Spleen (tissue), 13 donors: ENCODE measurements at regions of chr3 and their contacts with region 1.

Region 1: GRCh38 chr3:10738688-10739372 is 77.2 kb upstream of the SLC6A11 start:
- DNase-seq: peak; percentile 88
- H3K4me3 ChIP-seq: peak overlapping the region in 4 of 8 donors; percentile 9 to 50 (median 26)
- H3K27ac ChIP-seq: no peak overlapping the region
- H3K4me1 ChIP-seq: peaks cover 0 to 9% (median 7%) of the 10 kb centered on the region in 6 donors
- H3K27me3 ChIP-seq: peaks cover 0 to 62% (median 17%) of the 10 kb centered on the region in 7 donors
- CTCF ChIP-seq: peak; percentile 66 to 90 (median 84)
- POLR2A ChIP-seq: no peak

Region 2: DNA sequence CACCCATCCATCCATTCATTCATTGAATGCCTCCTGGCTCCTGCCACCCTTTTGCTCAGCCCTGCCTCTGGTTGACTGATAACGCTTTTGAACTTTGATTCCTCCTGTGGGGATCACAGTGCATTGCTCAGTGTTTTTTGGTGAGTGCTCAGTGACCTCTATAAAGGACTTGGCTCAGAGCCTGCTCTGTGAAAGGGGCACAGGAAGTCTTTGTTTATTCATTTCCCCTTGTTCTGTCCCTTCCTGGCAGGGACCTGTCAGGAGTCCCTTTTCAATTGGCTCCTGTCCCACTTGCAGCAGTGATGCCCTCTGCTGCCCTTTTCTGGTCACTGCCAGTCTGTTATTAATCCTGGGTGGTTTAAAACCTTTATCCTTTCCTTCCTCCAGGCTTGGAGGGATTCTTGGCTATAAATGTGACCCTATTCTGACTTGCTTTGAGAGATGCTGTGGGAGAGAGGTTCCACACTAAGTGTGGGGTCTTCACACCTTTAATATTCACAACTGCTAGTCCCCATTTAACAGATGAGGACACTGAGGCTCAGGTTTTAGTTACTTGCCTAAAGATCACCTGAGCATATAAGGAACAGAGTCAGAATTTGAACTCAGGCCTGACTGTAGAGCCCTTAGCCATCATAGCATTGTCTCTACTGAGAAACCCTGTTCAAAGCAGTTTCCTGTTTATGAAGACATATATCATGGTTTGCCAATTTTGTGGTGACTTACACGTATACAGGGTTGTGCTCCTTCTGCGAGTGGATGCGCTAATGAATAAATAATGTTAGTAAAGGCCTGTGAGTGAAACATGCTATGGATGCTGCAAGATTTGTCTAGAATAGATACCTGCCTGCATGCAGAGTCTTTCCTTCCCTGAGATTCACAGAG is 513.8 kb before region 1 on chr3:
- intact Hi-C with region 1: no loop called
- DNase-seq: peak; percentile 83
- H3K4me3 ChIP-seq: peak overlapping the region in 1 of 8 donors; percentile 22
- H3K27ac ChIP-seq: peak overlapping the region; percentile 8 to 80 (median 57)
- H3K4me1 ChIP-seq: peaks cover 34 to 99% (median 69%) of the 10 kb centered on the region in 6 donors
- H3K27me3 ChIP-seq: no peaks in the 10 kb centered on the region
- CTCF ChIP-seq: peak; percentile 64 to 97 (median 84)
- POLR2A ChIP-seq: no peak

Region 3: DNA sequence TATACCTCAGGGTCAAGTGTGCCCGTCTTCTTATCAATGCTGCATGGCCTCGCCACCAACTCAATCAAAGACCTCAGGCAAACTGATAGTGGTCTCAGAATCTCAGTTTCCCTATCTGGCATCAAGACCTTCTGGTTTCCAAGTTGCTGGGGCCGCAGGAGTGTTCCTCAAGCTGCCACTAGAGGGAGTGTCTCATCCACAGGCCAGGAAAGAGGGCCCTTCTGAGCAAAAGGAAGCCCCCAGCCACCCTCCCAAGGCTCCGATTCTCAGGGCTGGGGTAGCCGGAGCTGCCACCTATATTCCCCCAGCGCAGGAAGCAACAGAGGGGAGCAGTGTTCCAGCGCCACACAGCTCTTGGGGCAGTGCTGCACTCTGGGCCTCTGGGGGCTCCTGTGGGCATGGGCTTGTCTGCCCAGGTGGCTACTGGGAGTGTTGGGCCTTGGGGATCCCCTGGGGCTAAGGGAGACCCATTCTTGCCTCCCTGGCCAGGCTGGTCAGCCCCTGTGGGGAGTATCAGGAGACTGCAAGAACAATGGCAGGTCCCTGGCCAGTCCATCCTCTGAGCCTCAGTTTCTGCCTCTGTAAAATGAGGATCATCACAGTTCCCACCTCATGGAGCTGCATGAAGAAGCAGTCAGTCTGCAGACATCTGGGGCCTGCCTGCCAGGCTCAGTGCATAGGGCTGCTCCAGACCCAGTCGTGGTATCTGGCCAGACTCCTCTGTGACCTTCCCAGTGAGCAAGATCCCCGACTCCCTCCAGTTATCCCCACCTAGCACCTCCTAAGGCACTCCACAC is 394.5 kb before region 1 on chr3:
- intact Hi-C with region 1: loop called (anchors 5 kb)
- DNase-seq: peak; percentile 74
- H3K4me3 ChIP-seq: no peak overlapping the region
- H3K27ac ChIP-seq: no peak overlapping the region
- H3K4me1 ChIP-seq: peaks cover 0 to 6% (median 0%) of the 10 kb centered on the region in 6 donors
- H3K27me3 ChIP-seq: peaks cover 0 to 10% (median 0%) of the 10 kb centered on the region in 7 donors
- CTCF ChIP-seq: peak; percentile 47 to 94 (median 85)
- POLR2A ChIP-seq: no peak

Region 4: DNA sequence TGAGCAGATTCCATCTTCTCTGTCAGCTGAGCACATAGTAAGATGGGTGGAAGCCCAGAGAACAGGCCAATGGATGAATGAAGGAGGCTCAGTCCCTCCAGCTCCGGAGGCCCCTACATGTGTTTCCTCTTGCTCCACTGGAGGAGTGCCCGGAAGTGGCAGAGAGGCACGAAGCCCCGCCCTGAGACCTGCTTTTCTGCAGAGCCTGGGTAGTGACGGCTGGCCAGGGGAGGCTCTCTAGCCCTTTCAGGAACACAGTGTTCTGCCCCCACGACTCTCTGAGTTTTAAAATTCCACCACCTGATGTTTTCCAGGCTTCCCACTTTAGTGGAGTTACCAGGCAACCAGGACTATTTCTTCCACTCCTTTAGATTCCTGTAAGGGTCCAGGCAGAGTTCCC is 72.2 kb before region 1 on chr3:
- intact Hi-C with region 1: no loop called
- DNase-seq: no peak
- H3K4me3 ChIP-seq: no peak overlapping the region
- H3K27ac ChIP-seq: no peak overlapping the region
- H3K4me1 ChIP-seq: peaks cover 0 to 10% (median 0%) of the 10 kb centered on the region in 6 donors
- H3K27me3 ChIP-seq: peaks cover 0 to 56% (median 11%) of the 10 kb centered on the region in 7 donors
- CTCF ChIP-seq: no peak
- POLR2A ChIP-seq: no peak

Region 5: DNA sequence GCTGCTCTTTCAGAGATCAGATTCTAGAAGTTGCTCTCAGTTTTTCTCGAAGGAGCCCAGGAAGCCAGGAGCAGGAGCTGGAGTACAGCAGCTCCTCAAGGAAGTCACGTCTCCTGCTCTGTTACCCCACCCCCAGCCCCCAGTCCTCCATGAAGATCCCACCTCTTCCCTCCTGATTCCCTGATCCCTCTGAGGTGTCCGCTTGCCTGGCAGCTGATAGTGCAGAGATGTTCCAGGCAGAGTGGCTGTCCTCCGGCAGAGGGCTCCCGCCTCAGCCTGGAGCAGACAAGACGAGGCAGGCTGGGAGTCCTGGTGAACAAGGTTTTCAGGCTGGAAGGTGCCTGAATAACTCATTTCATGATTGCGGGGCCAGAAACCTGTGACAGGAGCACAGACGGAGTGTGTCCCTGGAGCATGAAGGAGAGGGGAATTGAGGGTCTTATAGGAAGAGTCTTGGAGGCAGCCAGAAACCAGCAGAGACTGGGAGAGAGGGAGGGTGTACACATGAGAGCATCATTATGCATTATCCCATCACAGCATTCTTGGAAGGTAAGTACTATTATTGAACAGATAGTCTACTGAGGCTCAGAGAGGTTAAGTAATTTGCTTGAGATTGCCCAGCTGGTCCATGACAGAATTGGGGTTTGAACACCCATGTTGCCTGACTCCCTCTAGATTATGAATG is 416.7 kb after region 1 on chr3:
- intact Hi-C with region 1: no loop called
- DNase-seq: no peak
- H3K4me3 ChIP-seq: peak overlapping the region in 6 of 8 donors; percentile 26 to 69 (median 40)
- H3K27ac ChIP-seq: no peak overlapping the region
- H3K4me1 ChIP-seq: peaks cover 0 to 34% (median 16%) of the 10 kb centered on the region in 6 donors
- H3K27me3 ChIP-seq: peaks cover 0 to 83% (median 26%) of the 10 kb centered on the region in 7 donors
- CTCF ChIP-seq: peak in 8 of 11 experiments; percentile 16 to 51 (median 38)
- POLR2A ChIP-seq: no peak